Sciatic nerve (tissue), 2 donors: ENCODE measurements at regions of chr6 and their contacts with region 1.

Region 1: DNA sequence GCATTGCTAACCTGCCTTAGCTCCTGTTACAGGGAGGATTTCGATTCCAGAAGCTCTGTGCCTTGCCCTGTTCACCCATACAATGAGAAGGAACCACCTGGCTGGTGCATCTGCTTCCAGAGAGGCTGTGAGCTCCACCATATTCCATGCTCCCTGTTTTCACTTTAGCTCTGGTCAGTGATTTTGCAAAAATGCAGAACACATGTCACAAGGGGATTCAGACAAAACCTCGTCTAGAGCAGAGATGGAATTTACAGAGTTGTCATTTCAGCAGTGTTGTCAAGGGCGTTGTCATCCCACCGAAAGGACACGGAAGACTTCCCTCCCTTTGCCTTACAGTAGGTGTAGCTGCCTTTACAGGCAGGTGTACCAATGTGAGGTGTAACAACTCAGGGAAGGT is 223.0 kb upstream of the ARID1B start:
- DNase-seq: no peak
- ATAC-seq: no peak

Region 2: GRCh38 chr6:154733012-154733625 is 1821.0 kb before region 1 on chr6 and contains the start of gene SCAF8:
- intact Hi-C with region 1: no loop called
- DNase-seq: peak; percentile 90
- ATAC-seq: peak; percentile 86
- total RNA-seq, gene SCAF8: 63.4 TPM

Region 3: GRCh38 chr6:155936551-155936950 is 617.6 kb before region 1 on chr6:
- intact Hi-C with region 1: loop called (anchors 5 kb)
- DNase-seq: no peak
- ATAC-seq: peak; percentile 97

Region 4: DNA sequence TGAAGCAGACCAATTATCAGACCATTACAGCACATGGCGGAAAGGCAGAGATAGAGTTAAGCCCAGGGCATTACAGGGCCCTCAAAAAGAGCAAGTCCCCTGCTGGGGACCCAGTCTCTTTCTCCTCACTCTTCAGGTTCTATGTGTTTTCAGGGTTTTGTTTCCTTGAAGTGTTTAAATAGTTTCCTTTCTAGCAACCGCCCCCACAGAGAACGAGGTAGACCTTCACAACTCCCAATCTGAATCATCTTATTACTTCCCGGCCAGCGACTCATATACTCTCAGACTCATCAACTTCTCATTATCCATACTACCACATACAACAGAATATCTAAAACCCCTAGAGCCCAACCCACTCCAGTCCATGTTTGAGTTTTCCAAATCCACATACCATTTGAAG is 303.6 kb before region 1 on chr6:
- intact Hi-C with region 1: no loop called
- DNase-seq: no peak
- ATAC-seq: no peak

Region 5: GRCh38 chr6:156538875-156539660 is 15.1 kb before region 1 on chr6:
- intact Hi-C with region 1: no loop called
- DNase-seq: no peak
- ATAC-seq: no peak

Region 6: GRCh38 chr6:156617376-156617775 is 63.2 kb after region 1 on chr6:
- intact Hi-C with region 1: no loop called
- DNase-seq: no peak
- ATAC-seq: peak; percentile 77